H1 (cell line): ENCODE measurements at regions of chr20 and their contacts with region 1.

Region 1: DNA sequence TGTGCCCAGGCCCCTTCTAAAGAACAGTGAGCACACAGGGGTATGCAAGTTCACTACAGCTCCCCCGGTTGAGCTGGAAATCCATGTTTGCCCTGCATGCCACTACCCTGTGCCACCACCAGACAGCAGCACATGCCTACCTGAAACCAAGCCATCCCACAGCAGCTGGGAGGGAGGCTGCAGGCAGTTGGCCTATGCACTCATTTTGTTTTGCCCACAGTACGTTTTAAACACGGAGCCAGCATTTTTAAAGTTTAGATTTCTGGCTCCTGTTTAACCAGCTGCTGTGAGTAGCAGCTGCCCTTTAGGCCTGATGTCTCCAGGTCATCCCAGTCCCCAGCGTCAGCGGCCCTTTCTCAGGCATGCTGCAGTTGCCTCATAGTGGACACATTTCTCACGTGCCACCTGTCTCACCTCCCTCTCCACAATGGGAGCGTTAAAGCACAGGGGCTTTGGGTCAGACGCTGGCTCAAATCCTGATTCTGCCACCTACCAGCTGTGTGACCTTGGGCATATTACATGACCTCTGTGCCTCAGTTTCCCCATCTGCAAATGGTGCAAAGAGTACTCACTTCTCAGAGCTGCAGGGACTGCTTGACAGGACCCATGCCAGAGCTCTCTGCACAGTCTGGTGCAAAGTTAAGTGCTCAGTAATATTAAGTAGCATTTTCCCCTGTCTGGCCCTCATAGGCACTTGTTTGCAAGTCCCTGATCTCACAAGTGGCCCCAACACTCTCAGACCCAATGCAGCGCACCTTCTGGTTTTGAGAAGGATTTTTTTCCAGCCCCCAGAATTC is 8.1 kb upstream of the UBE2V1 start:
- DNase-seq: peak; percentile 56 to 66
- H3K4me3 ChIP-seq: no peak overlapping the region
- H3K27ac ChIP-seq: no peak overlapping the region
- H3K4me1 ChIP-seq: peaks cover 0 to 5% (median 1%) of the 10 kb centered on the region in 4 experiments; a peak in 3 of 7 replicates
- H3K27me3 ChIP-seq: no peaks in the 10 kb centered on the region
- CTCF ChIP-seq: peak; percentile 96 to 100 (median 97)
- EP300 ChIP-seq: no peak
- POLR2A ChIP-seq: no peak
- RAD21 ChIP-seq: peak; percentile 95 to 98

Region 2: DNA sequence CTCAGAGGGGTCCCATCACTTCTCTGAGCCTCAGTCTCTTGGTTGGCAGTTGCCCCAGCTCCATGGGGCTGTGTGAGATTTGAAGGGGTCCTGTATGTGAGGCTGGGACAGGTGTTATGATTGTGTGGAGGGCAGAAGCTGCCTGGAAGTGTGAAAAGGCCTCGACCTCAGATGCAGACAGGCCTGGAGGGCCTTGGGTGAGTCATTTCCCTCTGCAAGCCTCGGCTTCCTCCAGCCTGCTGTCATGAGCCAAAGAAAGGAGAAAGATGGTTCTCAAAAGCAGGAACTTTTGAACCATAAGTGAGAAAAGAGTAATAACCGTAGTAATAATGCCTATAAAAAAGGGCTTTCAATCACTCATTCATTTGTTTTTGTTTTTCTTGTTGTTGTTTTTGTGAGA is 100.8 kb before region 1 on chr20:
- CTCF ChIA-PET with region 1: no interaction called
- POLR2A ChIA-PET with region 1: no interaction called
- DNase-seq: no peak
- H3K4me3 ChIP-seq: no peak overlapping the region
- H3K27ac ChIP-seq: no peak overlapping the region
- H3K4me1 ChIP-seq: peaks cover 0 to 11% (median 8%) of the 10 kb centered on the region in 4 experiments; a peak in 6 of 7 replicates
- H3K27me3 ChIP-seq: peaks cover 0 to 3% (median 1%) of the 10 kb centered on the region in 4 experiments; a peak in 1 of 7 replicates
- CTCF ChIP-seq: no peak
- EP300 ChIP-seq: no peak
- POLR2A ChIP-seq: no peak
- RAD21 ChIP-seq: no peak

Region 3: GRCh38 chr20:50133474-50134217 is 12.6 kb after region 1 on chr20:
- CTCF ChIA-PET with region 1: interaction called, 92 read pairs
- POLR2A ChIA-PET with region 1: interaction called, 6 read pairs
- DNase-seq: no peak
- H3K4me3 ChIP-seq: no peak overlapping the region
- H3K27ac ChIP-seq: no peak overlapping the region
- H3K4me1 ChIP-seq: peaks cover 0 to 2% (median 0%) of the 10 kb centered on the region in 4 experiments; a peak in 1 of 7 replicates
- H3K27me3 ChIP-seq: no peaks in the 10 kb centered on the region
- CTCF ChIP-seq: peak in 1 of 3 experiments; percentile 27; a peak in 1 of 4 replicates
- EP300 ChIP-seq: no peak
- POLR2A ChIP-seq: no peak
- RAD21 ChIP-seq: no peak

Region 4: GRCh38 chr20:50138479-50139393 is 17.6 kb after region 1 on chr20:
- CTCF ChIA-PET with region 1: interaction called, 92 read pairs
- POLR2A ChIA-PET with region 1: interaction called, 8 read pairs
- DNase-seq: no peak
- H3K4me3 ChIP-seq: no peak overlapping the region
- H3K27ac ChIP-seq: peak overlapping the region; percentile 38; the same call in 1 of the 2 replicates
- H3K4me1 ChIP-seq: peaks cover 5 to 17% (median 8%) of the 10 kb centered on the region in 4 experiments
- H3K27me3 ChIP-seq: no peaks in the 10 kb centered on the region
- CTCF ChIP-seq: peak; percentile 24 to 45 (median 41); a peak in 3 of 4 replicates
- EP300 ChIP-seq: no peak
- POLR2A ChIP-seq: no peak
- RAD21 ChIP-seq: no peak; a peak in 1 of 4 replicates

Region 5: GRCh38 chr20:50153485-50154377 is 32.6 kb after region 1 on chr20 and contains the start of gene PEDS1:
- CTCF ChIA-PET with region 1: interaction called, 141 read pairs
- POLR2A ChIA-PET with region 1: interaction called, 27 read pairs
- DNase-seq: peak in 1 of 2 experiments; percentile 87
- H3K4me3 ChIP-seq: peak within 1 kb of the TSS; percentile 61 to 98 (median 86)
- H3K27ac ChIP-seq: peak within 1 kb of the TSS; percentile 26; the same call in 1 of the 2 replicates
- H3K4me1 ChIP-seq: peaks cover 9 to 27% (median 16%) of the 10 kb centered on the region in 4 experiments
- H3K27me3 ChIP-seq: peaks cover 0 to 3% (median under 1%) of the 10 kb centered on the region in 4 experiments; a peak in 2 of 7 replicates
- CTCF ChIP-seq: no peak
- EP300 ChIP-seq: no peak
- POLR2A ChIP-seq: peak; percentile 70 to 75
- RAD21 ChIP-seq: no peak
- total RNA-seq, gene PEDS1: 28.9 and 33.3 TPM in 2 replicates